ENCODE measurements at regions of chr17 and their contacts with region 1.

Region 1: GRCh38 chr17:58019039-58019438 is 12.0 kb upstream of the SRSF1 start:
- DNase-seq: no peak
- ATAC-seq: no peak
- H3K4me3 ChIP-seq: no peak overlapping the region
- H3K27ac ChIP-seq: no peak overlapping the region
- H3K4me1 ChIP-seq: no peaks in the 10 kb centered on the region
- H3K27me3 ChIP-seq: no peaks in the 10 kb centered on the region
- CTCF ChIP-seq: no peak
- POLR2A ChIP-seq: no peak

Region 2: DNA sequence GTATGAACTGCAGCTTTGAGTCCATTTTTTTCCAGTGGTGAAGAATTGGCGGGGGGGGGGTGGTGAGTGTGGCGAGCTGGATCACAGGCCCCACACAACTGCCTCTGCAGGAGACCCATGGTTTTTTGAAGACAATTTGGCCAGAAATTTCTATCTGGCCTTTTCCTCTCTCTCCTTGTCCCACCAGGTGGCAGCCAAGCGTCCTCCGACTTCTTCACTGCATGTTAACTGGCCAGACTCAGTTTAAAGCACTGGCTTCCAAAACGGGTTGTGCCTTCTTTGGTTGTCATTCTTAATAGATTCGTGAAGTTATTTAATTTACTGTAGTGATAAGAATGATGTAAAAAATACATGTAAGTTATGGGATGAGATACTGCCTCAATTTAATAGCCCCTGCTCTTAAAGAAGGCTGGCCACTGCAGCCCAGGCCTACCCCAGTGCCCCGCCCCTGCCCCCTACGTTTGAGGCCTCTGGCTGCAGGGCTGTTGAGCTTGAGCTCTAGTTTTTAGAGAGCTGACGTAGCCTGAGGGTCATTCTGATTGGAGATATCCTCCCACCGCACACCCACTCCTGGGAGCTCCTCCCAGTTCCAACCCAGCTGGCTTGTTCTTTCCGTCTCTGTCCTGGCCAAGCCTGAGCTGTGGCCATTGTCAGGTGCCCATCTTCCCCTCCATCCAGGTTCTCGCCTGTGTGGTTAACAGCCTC is 897.5 kb before region 1 on chr17:
- in situ Hi-C with region 1: loop called in 1 of 4 experiments (anchors 10 kb)
- intact Hi-C with region 1: no loop called
- DNase-seq: no peak
- ATAC-seq: no peak
- H3K4me3 ChIP-seq: no peak overlapping the region
- H3K27ac ChIP-seq: no peak overlapping the region
- H3K4me1 ChIP-seq: peaks cover 0 to 6% of the 10 kb centered on the region in 2 donors
- H3K27me3 ChIP-seq: no peaks in the 10 kb centered on the region
- CTCF ChIP-seq: peak in 3 of 5 experiments; percentile 21 to 52 (median 27)
- POLR2A ChIP-seq: no peak

Region 3: DNA sequence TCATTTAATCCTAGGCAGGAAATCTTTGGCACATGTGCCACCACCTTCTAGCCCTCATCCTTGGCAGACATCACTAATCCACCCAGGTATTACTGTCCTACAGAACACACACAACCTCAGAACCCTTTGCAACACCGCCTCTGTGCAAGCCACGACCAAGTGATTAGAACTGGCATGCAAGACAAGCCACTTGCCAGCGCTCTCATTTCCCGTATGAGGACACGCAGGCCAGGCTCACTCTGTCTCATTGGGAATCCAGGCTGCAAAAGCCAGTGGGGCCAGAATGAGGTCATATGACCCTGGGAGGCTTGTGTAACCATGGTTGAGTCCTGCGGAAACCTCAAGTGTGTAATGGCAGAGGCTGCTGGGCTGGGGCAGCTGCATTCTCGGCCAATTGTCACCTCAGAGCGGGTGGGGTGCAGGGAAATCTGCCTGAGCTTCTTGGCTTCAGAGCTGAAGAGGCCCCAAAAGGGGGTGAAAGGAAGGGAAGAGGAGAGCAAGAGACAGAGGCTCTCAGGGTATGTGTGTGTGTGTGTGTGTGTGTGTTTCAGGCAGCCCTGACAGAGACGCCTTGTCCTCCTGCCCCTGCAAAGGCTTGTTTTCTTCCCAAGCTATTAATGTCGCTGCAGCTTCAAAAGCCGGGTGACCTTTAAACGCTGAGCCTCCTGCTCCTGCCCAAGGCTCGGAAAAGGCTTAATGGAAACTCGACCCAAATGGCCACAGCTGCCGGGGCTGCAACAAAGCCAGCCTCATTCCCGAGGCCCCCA is 126.0 kb before region 1 on chr17:
- in situ Hi-C with region 1: no loop called
- intact Hi-C with region 1: no loop called
- DNase-seq: peak; percentile 97 to 99
- ATAC-seq: peak; percentile 63 to 70
- H3K4me3 ChIP-seq: peak overlapping the region; percentile 34 to 48 (median 40)
- H3K27ac ChIP-seq: peak overlapping the region; percentile 94 to 100 (median 98)
- H3K4me1 ChIP-seq: peaks cover 88 to 89% of the 10 kb centered on the region in 2 donors
- H3K27me3 ChIP-seq: no peaks in the 10 kb centered on the region
- CTCF ChIP-seq: peak in 3 of 5 experiments; percentile 6 to 21 (median 6)
- POLR2A ChIP-seq: peak; percentile 43 to 48

Region 4: GRCh38 chr17:57957120-57957850 is 61.8 kb before region 1 on chr17:
- in situ Hi-C with region 1: no loop called
- intact Hi-C with region 1: no loop called
- DNase-seq: no peak
- ATAC-seq: no peak
- H3K4me3 ChIP-seq: no peak overlapping the region
- H3K27ac ChIP-seq: peak overlapping the region in 3 of 4 donors; percentile 25 to 83 (median 29)
- H3K4me1 ChIP-seq: peaks cover 36 to 40% of the 10 kb centered on the region in 2 donors
- H3K27me3 ChIP-seq: no peaks in the 10 kb centered on the region
- CTCF ChIP-seq: no peak
- POLR2A ChIP-seq: no peak